Natural killer cell (primary cell): ENCODE measurements at regions of chr2 and their contacts with region 1.

Region 1: DNA sequence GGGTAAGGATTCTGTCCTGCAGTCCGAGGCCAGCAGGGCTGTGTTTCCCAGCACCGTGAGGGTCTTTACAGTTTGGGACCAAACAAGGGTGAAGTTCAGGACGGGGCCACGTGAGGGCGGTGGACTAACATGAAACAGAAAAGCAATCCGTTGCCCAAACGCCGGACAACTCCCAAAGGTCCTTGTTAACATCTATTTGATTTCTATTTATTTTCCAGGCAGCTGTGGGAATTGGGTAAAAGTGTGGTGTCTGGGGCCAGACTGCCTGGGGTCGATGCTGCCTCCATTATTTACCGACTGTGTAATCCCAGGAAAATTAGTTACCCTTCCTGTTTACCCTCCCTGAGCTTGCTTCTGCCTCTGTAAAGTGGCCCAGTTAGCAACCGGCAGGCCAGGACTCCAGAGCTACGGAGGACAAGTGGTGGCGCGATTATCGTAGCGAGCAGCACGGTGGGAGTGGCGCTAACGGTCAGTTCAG is 66.3 kb upstream of the TCF7L1 start:
- DNase-seq: peak; percentile 22 to 47
- ATAC-seq: peak in 2 of 3 donors; percentile 42 to 63
- H3K4me3 ChIP-seq: no peak overlapping the region
- H3K4me3 Mint-ChIP-seq: no peak overlapping the region
- H3K27ac ChIP-seq: no peak overlapping the region
- H3K27ac Mint-ChIP-seq: no peak overlapping the region
- H3K4me1 ChIP-seq: peaks cover 6% of the 10 kb centered on the region
- H3K4me1 Mint-ChIP-seq: peaks cover 0 to 9% of the 10 kb centered on the region in 2 donors
- H3K27me3 ChIP-seq: no peaks in the 10 kb centered on the region
- H3K27me3 Mint-ChIP-seq: peaks cover 18 to 44% of the 10 kb centered on the region in 2 donors
- CTCF ChIP-seq: peak; percentile 55

Region 2: DNA sequence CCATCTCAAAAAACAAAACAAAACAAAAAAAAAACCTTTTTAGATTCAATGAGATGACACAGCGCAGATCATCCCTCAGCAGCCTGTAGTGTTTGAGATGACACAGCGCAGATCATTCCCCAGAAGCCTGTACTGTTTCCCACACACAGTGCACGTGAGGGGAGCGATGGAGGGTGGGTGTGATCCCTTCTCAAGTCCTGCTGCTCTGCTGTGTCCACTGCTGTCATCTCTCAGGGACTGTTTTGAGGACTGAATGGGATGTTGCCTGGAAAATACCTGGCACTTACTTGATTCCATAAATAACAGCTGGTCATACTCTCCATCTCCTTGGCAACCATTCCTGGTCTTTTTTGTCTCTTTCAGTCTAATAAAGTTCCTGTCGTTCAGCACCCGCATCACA is 235.2 kb after region 1 on chr2:
- intact Hi-C with region 1: loop called (anchors 2 kb)
- DNase-seq: no peak
- ATAC-seq: no peak
- H3K4me3 ChIP-seq: no peak overlapping the region
- H3K4me3 Mint-ChIP-seq: no peak overlapping the region
- H3K27ac ChIP-seq: no peak overlapping the region
- H3K27ac Mint-ChIP-seq: no peak overlapping the region
- H3K4me1 ChIP-seq: peaks cover 8% of the 10 kb centered on the region
- H3K4me1 Mint-ChIP-seq: peaks cover 0 to 10% of the 10 kb centered on the region in 2 donors
- H3K27me3 ChIP-seq: no peaks in the 10 kb centered on the region
- H3K27me3 Mint-ChIP-seq: peaks cover 0 to 9% of the 10 kb centered on the region in 2 donors
- CTCF ChIP-seq: no peak